Transverse colon (tissue), 4 donors: ENCODE measurements at regions of chr3 and their contacts with region 1.

Region 1: GRCh38 chr3:14391033-14391432 is 11.4 kb upstream of the SLC6A6 start:
- DNase-seq: no peak
- H3K4me3 ChIP-seq: no peak overlapping the region
- H3K27ac ChIP-seq: peak overlapping the region in 3 of 4 donors; percentile 42 to 56 (median 53)
- H3K4me1 ChIP-seq: peaks cover 0 to 11% (median 7%) of the 10 kb centered on the region in 4 donors
- H3K27me3 ChIP-seq: no peaks in the 10 kb centered on the region
- CTCF ChIP-seq: no peak
- EP300 ChIP-seq: no peak
- POLR2A ChIP-seq: no peak

Region 2: GRCh38 chr3:14360123-14360881 is 30.7 kb before region 1 on chr3:
- in situ Hi-C with region 1: no loop called
- intact Hi-C with region 1: loop called (anchors 1 kb)
- DNase-seq: no peak
- H3K4me3 ChIP-seq: no peak overlapping the region
- H3K27ac ChIP-seq: no peak overlapping the region
- H3K4me1 ChIP-seq: peaks cover 0 to 3% (median 0%) of the 10 kb centered on the region in 4 donors
- H3K27me3 ChIP-seq: no peaks in the 10 kb centered on the region
- CTCF ChIP-seq: no peak
- EP300 ChIP-seq: no peak
- POLR2A ChIP-seq: no peak

Region 3: GRCh38 chr3:14461748-14462324 is 70.8 kb after region 1 on chr3:
- in situ Hi-C with region 1: loop called in 2 of 4 experiments (anchors 10 kb)
- intact Hi-C with region 1: no loop called
- DNase-seq: peak; percentile 72
- H3K4me3 ChIP-seq: no peak overlapping the region
- H3K27ac ChIP-seq: no peak overlapping the region
- H3K4me1 ChIP-seq: peaks cover 0 to 8% (median 4%) of the 10 kb centered on the region in 4 donors
- H3K27me3 ChIP-seq: no peaks in the 10 kb centered on the region
- CTCF ChIP-seq: peak; percentile 42 to 82 (median 57)
- EP300 ChIP-seq: no peak
- POLR2A ChIP-seq: no peak